AG04450 (cell line): ENCODE measurements at regions of chr4 and their contacts with region 1.

Region 1: GRCh38 chr4:54802336-54802735 is 144.6 kb downstream of the KIT start:
- DNase-seq: no peak
- H3K4me3 ChIP-seq: no peak overlapping the region
- H3K27ac ChIP-seq: no peak overlapping the region
- H3K27me3 ChIP-seq: no peaks in the 10 kb centered on the region
- CTCF ChIP-seq: no peak

Region 2: GRCh38 chr4:54823616-54824015 is 21.3 kb after region 1 on chr4:
- CTCF ChIA-PET with region 1: no interaction called
- POLR2A ChIA-PET with region 1: no interaction called
- DNase-seq: no peak
- H3K4me3 ChIP-seq: no peak overlapping the region
- H3K27ac ChIP-seq: no peak overlapping the region
- H3K27me3 ChIP-seq: no peaks in the 10 kb centered on the region
- CTCF ChIP-seq: no peak

Region 3: DNA sequence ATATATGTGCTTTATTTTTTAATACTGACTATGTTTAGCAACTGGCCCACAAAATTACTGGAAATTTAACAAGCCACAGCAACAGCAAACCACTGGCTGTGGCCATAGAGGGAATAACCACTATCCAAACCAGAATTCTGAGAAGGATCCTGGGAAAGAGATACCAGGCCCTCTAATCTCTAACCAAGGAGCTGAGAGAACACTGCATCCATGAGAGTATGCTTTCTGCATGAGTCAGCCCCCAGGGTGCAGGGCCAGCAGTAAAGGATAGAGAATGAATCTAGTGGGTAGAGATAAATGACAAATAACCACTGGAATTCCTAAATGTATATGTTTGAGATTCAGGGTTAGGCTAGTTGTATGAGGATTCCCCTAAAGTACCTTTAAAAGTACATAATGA is 77.2 kb after region 1 on chr4:
- CTCF ChIA-PET with region 1: interaction called, 10 read pairs
- POLR2A ChIA-PET with region 1: no interaction called
- DNase-seq: no peak
- H3K4me3 ChIP-seq: no peak overlapping the region
- H3K27ac ChIP-seq: no peak overlapping the region
- H3K27me3 ChIP-seq: no peaks in the 10 kb centered on the region
- CTCF ChIP-seq: no peak

Region 4: GRCh38 chr4:55372259-55372658 is 569.9 kb after region 1 on chr4:
- CTCF ChIA-PET with region 1: no interaction called
- POLR2A ChIA-PET with region 1: no interaction called
- DNase-seq: no peak
- H3K4me3 ChIP-seq: no peak overlapping the region
- H3K27ac ChIP-seq: no peak overlapping the region
- H3K27me3 ChIP-seq: no peaks in the 10 kb centered on the region
- CTCF ChIP-seq: no peak